ENCODE measurements at regions of chr7 and their contacts with region 1.

Region 1: GRCh38 chr7:135170274-135170997 is at the start of gene CYREN:
- DNase-seq: peak; percentile 96
- H3K4me3 Mint-ChIP-seq: peak within 1 kb of the TSS; percentile 96
- H3K27ac Mint-ChIP-seq: peak within 1 kb of the TSS; percentile 95
- H3K4me1 Mint-ChIP-seq: peaks cover 46% of the 10 kb centered on the region
- H3K27me3 Mint-ChIP-seq: no peaks in the 10 kb centered on the region
- total RNA-seq, gene CYREN: 52.8 and 55.1 TPM in 2 replicates

Region 2: DNA sequence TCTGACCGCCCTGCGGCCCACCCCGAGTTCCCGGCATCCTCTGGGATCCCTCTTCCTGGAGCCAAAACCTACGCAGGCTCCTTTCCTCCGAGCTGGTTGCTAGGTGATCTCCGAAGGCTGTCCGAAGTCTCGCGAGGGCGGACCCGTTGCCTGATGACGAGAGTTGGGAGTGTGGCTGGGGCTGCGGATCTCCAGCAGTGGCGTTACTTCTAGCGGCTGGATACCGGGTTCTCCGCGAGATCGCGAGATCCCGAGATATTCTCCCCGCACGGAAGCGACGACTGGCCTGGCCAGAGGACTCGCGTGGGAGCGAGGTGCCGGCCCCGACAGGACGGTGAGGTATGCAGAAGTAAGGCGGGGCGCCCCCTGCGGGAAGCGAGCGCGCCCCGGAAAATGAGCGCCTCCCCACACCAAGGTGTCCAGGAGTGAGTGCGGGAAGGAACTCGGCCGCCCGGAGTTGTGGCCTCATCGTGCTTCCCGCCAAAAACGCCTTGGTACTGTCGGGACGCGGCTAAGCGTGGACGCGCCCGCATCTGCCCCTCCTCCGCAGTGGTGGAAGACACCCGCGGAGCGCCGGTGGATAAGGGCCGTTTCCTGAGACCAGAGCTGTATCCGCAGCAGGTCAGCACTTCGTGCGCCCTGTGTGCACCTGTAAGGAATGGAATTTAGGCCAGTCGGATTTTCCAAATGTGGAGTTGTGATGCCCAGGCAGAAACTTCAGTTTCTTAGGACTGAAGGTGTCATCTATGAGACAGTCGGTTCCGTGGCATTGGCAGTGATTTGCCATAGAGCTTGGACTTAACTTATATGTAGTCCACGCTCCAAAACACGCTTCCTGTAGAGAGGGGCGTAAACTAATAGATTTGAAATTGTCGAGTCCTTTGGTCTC is 183.8 kb before region 1 on chr7 and contains the start of gene AGBL3:
- intact Hi-C with region 1: loop called (anchors 1 kb)
- DNase-seq: peak; percentile 97
- H3K4me3 Mint-ChIP-seq: peak within 1 kb of the TSS; percentile 97
- H3K27ac Mint-ChIP-seq: peak within 1 kb of the TSS; percentile 95
- H3K4me1 Mint-ChIP-seq: peaks cover 31% of the 10 kb centered on the region
- H3K27me3 Mint-ChIP-seq: no peaks in the 10 kb centered on the region
- total RNA-seq, gene AGBL3: 2.0 and 3.4 TPM in 2 replicates

Region 3: DNA sequence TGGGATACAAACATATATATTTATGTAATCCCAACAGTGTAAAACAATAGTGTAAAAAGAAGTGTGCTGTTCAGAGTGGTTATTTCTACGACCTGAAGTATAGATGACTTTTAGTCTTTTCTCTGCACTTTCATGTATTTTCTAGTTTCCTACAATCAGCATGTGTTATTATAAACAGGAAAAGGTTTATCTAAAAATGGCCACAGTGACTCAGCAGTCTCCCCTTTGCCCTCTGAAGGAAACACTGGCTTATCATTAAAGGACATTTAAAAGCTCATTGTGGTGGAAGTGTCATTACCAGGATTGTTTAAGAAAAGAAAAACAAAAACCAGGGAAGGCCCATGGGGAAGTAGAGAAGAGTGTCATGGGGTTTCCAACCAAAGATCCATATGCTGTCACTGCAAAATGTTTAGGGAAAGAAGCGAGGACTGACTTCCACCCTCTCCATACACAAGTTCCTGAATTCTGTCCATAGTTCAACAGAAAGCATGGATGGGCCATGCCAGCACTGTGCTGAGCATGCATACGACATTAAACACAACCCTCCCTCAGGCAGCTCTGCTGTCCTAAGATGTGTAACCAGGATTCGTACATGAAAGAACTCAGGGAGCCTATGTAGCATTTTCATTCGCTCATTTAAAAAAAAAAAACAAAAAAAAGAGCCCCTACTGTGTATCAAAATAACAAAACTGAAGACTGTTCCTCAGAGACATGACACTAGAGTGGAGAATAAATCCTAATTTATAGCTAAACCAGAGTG is 10.2 kb before region 1 on chr7:
- intact Hi-C with region 1: loop called (anchors 1 kb)
- DNase-seq: no peak
- H3K4me3 Mint-ChIP-seq: peak overlapping the region; percentile 46
- H3K27ac Mint-ChIP-seq: peak overlapping the region; percentile 82
- H3K4me1 Mint-ChIP-seq: peaks cover 30% of the 10 kb centered on the region
- H3K27me3 Mint-ChIP-seq: no peaks in the 10 kb centered on the region

Region 4: DNA sequence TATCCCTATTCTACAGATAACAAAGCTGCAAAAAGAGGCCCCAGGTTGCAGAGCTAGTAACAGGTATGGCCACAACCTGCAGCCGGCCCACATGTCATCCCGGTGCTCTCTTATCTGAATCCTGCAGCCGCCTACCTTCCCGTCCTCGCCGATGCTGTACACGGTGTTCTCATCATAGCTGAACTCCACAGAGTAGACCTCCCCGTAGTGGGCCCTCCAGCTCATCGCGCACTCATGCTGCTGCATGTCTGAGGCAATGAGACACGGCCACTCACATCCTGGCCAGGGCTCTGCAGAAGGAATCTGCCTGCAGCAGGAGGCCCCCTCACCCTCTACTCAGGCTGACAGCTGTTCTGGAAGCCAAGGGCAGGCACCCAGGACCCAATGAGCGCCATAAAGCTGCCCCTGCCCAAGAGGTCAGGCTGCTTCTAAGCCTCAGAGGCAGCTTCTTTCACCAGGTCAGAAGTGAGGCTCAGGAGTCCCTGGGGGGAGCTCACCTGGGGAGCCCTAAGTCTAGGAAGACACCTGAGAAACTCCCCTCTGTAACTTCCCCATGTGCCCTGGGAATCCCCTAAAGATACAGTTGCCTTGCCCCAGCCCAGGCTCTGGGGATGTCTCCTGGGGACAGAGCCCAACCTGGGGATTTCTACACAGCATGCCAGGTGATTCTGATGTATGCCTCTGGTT is 18.0 kb after region 1 on chr7:
- intact Hi-C with region 1: no loop called
- DNase-seq: no peak
- H3K4me3 Mint-ChIP-seq: no peak overlapping the region
- H3K27ac Mint-ChIP-seq: no peak overlapping the region
- H3K4me1 Mint-ChIP-seq: peaks cover 5% of the 10 kb centered on the region
- H3K27me3 Mint-ChIP-seq: no peaks in the 10 kb centered on the region

Region 5: GRCh38 chr7:135274495-135275268 is 104.2 kb after region 1 on chr7:
- intact Hi-C with region 1: no loop called
- DNase-seq: peak; percentile 93
- H3K4me3 Mint-ChIP-seq: no peak overlapping the region
- H3K27ac Mint-ChIP-seq: no peak overlapping the region
- H3K4me1 Mint-ChIP-seq: peaks cover 3% of the 10 kb centered on the region
- H3K27me3 Mint-ChIP-seq: peaks cover 7% of the 10 kb centered on the region

Region 6: GRCh38 chr7:135291809-135292253 is 121.4 kb after region 1 on chr7:
- intact Hi-C with region 1: no loop called
- DNase-seq: no peak
- H3K4me3 Mint-ChIP-seq: no peak overlapping the region
- H3K27ac Mint-ChIP-seq: no peak overlapping the region
- H3K4me1 Mint-ChIP-seq: no peaks in the 10 kb centered on the region
- H3K27me3 Mint-ChIP-seq: peaks cover 11% of the 10 kb centered on the region

Region 7: GRCh38 chr7:135509903-135510602 is 339.6 kb after region 1 on chr7 and contains the start of gene CNOT4:
- intact Hi-C with region 1: loop called (anchors 1 kb)
- DNase-seq: peak; percentile 97
- H3K4me3 Mint-ChIP-seq: no peak within 1 kb of the TSS
- H3K27ac Mint-ChIP-seq: no peak within 1 kb of the TSS
- H3K4me1 Mint-ChIP-seq: peaks cover 13% of the 10 kb centered on the region
- H3K27me3 Mint-ChIP-seq: no peaks in the 10 kb centered on the region
- total RNA-seq, gene CNOT4: 21.1 and 26.3 TPM in 2 replicates

Region 8: GRCh38 chr7:135977007-135977741 is 806.7 kb after region 1 on chr7 and contains the start of gene MTPN:
- intact Hi-C with region 1: loop called (anchors 10 kb)
- DNase-seq: peak; percentile 99
- H3K4me3 Mint-ChIP-seq: peak within 1 kb of the TSS; percentile 95
- H3K27ac Mint-ChIP-seq: peak within 1 kb of the TSS; percentile 86
- H3K4me1 Mint-ChIP-seq: peaks cover 61% of the 10 kb centered on the region
- H3K27me3 Mint-ChIP-seq: no peaks in the 10 kb centered on the region
- total RNA-seq, gene MTPN: 121 and 126 TPM in 2 replicates

Measured in activated CD4-positive, alpha-beta T cell treated with anti-CD3 and anti-CD28 coated beads, Interleukin-2, amount 10 ng/mL, durations not matched to agents 24 days and 14 days (primary cell).